Right ventricle myocardium inferior (tissue), 1 donor: ENCODE measurements at regions of chr1 and their contacts with region 1.

Region 1: GRCh38 chr1:183804881-183805841 is at the start of gene RGL1:
- DNase-seq: peak; percentile 83
- ATAC-seq: peak; percentile 93
- total RNA-seq, gene RGL1: 18.9 TPM

Region 2: GRCh38 chr1:183871142-183871541 is 66.0 kb after region 1 on chr1:
- intact Hi-C with region 1: loop called (anchors 5 kb)
- DNase-seq: no peak
- ATAC-seq: no peak

Region 3: GRCh38 chr1:183881387-183882131 is 76.4 kb after region 1 on chr1:
- intact Hi-C with region 1: no loop called
- DNase-seq: peak; percentile 76
- ATAC-seq: peak; percentile 40

Region 4: DNA sequence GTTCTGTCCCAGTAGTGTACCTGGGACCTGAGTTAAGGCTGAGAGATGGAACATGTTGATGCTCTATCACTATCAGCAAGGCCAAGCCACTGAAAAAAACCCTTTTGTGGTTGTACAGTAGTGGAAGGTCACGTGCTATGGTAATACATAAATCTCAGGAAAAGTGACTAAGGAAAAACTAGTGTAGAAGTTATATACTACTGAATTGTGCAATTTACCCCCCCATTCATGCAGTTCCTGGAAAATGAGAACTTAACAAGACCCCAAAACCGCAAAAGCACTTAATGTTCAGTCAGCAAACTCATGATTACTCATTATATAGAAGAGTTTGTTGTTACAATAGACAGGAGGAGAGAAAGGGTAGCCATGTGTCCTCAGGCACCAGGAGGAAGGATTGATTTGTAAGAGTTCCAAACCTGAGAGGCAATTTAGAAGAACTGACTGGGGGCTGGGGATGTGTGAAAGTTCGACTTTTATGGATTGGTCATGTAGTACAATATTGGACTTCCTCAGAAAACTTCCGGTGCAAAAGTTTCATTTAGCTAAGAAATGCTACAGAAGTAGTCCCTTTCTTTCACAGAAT is 91.4 kb after region 1 on chr1:
- intact Hi-C with region 1: no loop called
- DNase-seq: no peak
- ATAC-seq: peak; percentile 18